ENCODE measurements at regions of chr1 and their contacts with region 1.

Region 1: DNA sequence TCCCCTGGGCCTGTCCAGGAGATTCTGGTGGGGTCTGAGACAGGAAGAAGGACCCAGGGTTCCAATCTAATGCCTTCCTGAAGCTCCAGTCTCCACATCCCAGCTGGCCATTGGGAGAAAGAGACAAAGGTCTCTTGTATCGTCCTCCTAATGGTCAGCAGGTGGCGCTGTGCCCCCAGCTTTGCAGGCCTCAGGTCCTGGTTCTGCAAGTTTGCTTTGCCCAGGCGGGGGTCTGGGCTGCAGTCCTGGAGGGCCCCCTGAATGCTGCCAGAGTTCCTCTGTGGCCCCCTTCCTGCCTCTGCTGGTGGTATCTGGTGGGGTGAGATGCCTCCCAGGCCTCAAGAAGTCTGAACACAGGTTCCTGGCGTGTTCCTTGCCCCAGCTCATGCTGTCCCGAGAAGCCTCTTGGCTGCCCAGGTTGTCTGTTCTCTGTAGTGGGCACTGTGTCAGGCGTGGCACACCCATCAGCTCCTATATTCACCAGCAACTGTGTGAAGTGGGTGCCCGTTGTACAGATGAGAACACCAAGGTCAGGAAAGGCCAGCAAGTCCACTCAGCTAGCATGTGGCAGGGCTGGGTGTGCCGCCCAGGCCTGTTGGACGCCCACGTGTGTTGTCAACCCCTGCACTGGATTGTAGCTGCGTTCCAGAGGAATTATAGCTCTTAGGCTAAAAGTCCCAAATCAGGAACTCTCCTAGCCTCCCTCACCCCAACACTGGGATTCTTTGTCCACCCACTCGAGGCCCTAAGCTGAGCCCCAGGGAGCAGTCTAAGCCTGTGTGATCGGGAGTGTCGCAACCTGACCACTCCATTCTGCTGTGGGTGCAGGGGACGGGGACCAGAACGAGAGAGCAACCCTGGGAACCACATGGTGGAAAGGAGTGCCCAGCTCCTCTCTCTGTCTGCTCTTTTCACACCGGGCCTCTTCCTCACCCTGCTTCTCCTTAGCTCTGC is 33.9 kb upstream of the CSF3R start:
- DNase-seq: peak; percentile 37 to 71
- ATAC-seq: peak; percentile 47 to 65 (median 64)
- H3K4me3 ChIP-seq: no peak overlapping the region
- H3K4me3 Mint-ChIP-seq: no peak overlapping the region
- H3K27ac ChIP-seq: no peak overlapping the region
- H3K27ac Mint-ChIP-seq: no peak overlapping the region
- H3K4me1 ChIP-seq: no peaks in the 10 kb centered on the region
- H3K4me1 Mint-ChIP-seq: no peaks in the 10 kb centered on the region
- H3K27me3 ChIP-seq: no peaks in the 10 kb centered on the region
- H3K27me3 Mint-ChIP-seq: peaks cover 0 to 2% of the 10 kb centered on the region in 2 donors
- CTCF ChIP-seq: peak; percentile 71

Region 2: GRCh38 chr1:36285448-36286101 is 231.1 kb before region 1 on chr1:
- intact Hi-C with region 1: no loop called
- DNase-seq: peak; percentile 33 to 94
- ATAC-seq: peak; percentile 93 to 98 (median 94)
- H3K4me3 ChIP-seq: no peak overlapping the region
- H3K4me3 Mint-ChIP-seq: no peak overlapping the region
- H3K27ac ChIP-seq: no peak overlapping the region
- H3K27ac Mint-ChIP-seq: peak overlapping the region; percentile 63 to 66
- H3K4me1 ChIP-seq: no peaks in the 10 kb centered on the region
- H3K4me1 Mint-ChIP-seq: peaks cover 7 to 22% of the 10 kb centered on the region in 2 donors
- H3K27me3 ChIP-seq: no peaks in the 10 kb centered on the region
- H3K27me3 Mint-ChIP-seq: no peaks in the 10 kb centered on the region
- CTCF ChIP-seq: peak; percentile 87

Region 3: GRCh38 chr1:37434292-37434907 is 917.8 kb after region 1 on chr1:
- intact Hi-C with region 1: loop called (anchors 5 kb)
- DNase-seq: peak; percentile 66 to 76
- ATAC-seq: peak; percentile 86 to 95 (median 95)
- H3K4me3 ChIP-seq: no peak overlapping the region
- H3K4me3 Mint-ChIP-seq: no peak overlapping the region
- H3K27ac ChIP-seq: no peak overlapping the region
- H3K27ac Mint-ChIP-seq: no peak overlapping the region
- H3K4me1 ChIP-seq: peaks cover 5% of the 10 kb centered on the region
- H3K4me1 Mint-ChIP-seq: no peaks in the 10 kb centered on the region
- H3K27me3 ChIP-seq: no peaks in the 10 kb centered on the region
- H3K27me3 Mint-ChIP-seq: peaks cover 6 to 20% of the 10 kb centered on the region in 2 donors
- CTCF ChIP-seq: peak; percentile 90